ENCODE measurements at regions of chr10 and their contacts with region 1.

Region 1: DNA sequence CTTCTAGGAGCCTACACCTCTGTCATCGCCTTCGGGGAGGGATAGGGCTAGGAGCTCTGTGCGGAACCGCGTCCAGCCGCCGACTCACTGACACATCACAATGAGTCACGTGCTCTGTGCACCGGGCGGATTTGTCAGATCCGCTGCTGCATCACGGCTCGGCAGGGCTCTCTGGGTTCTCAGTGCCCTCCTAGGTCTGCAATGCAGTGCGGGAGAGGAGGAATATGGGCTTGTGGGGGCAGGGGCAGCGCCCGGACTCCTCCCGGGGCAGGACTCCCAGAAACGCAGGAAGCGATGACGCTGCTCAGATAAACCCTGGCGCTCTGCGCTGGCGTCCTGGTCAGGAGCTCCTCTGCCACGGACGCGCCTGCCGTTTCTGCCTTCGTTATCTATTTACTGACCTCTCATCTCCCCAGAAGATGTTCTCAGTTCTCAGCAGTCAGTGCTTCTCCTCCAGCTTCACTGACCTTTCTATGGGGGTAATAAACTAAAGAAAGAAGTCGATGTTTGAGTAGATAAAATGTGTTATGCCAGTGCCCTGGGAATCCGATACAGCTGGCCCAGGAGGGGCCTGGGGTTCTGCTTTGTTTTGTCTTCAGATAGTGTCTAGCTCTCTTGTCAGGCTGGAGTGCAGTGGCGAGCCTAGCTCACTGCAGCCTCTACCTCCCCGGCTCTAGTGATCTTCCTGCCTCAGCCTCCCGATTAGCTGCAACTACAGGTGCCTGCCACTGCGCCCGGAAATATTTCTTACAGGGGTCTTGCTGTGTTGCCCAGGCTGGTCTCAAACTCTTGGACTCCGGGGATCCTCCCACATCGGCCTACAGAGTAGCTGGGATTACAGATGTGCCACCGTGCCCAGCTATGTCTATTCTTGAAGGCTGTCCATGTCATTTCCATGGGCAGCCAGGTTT is 22.8 kb upstream of the ITGB1 start:
- DNase-seq: peak; percentile 92
- H3K4me3 Mint-ChIP-seq: peak overlapping the region; percentile 90
- H3K27ac Mint-ChIP-seq: peak overlapping the region; percentile 87
- H3K4me1 Mint-ChIP-seq: peaks cover 20% of the 10 kb centered on the region
- H3K27me3 Mint-ChIP-seq: peaks cover 2% of the 10 kb centered on the region

Region 2: DNA sequence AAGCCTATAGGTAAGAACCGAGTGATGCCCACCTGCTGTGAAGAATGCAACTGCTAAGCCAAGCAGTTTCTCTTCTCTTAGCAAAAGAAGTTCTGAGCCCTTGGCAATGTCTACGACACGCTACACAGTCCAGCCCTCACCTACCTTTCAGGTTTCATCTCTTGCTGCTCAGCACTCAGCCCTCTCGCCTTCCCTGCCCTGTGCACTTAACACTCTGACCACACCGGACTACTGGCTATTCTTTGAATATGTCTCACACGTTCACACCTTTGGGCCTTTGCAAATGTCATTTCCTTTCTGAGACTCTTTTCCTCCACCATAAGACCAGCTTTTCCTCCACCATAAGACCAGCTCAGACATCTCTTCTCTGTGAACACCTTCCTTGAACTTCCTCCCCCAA is 44.2 kb after region 1 on chr10:
- intact Hi-C with region 1: loop called (anchors 1 kb)
- DNase-seq: no peak
- H3K4me3 Mint-ChIP-seq: no peak overlapping the region
- H3K27ac Mint-ChIP-seq: no peak overlapping the region
- H3K4me1 Mint-ChIP-seq: peaks cover 8% of the 10 kb centered on the region
- H3K27me3 Mint-ChIP-seq: peaks cover 12% of the 10 kb centered on the region

Measured in activated CD4-positive, alpha-beta T cell treated with anti-CD3 and anti-CD28 coated beads, Interleukin-2, amount 10 ng/mL, durations not matched to agents 24 days and 14 days (primary cell).